Lower leg skin (tissue), 4 donors: ENCODE measurements at regions of chr22 and their contacts with region 1.

Region 1: DNA sequence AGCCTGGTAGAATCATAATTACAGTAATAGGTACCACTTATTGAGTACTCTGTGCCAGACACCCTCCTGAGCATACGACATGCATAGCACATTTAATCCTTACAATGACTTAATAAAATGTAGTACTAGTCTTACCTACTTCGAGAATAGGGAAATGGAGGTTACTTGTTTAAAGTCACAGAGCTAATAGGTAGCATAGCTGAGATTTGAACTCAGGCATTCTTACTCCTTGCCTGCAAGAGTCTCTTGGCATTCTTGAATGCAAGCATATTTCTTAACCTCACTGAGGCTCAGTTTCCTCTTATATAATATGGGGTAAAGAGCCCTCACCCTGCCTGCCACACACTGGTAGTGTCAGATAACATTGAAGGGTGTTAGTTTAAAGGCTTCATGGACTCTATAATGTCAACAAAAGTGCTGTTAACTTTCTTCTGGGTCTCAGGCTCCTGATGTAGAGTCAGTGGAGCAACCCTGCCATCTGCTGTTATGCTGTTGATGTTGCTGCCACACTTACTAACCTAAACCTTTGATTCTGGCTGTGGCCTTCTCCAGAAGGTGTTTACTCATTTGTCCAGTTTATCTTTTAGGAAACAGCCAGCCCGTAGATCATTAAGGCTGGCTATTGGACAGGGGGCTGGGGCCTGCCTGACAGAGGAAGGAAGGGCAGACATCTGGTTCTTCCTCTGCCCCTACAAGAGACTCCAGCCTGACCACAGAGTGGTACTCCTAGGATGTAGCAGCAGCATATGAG is 18.9 kb downstream of the LIMK2 start:
- DNase-seq: peak in 1 of 2 donors; percentile 37
- H3K4me3 ChIP-seq: no peak overlapping the region
- CTCF ChIP-seq: peak in 1 of 3 donors; percentile 65
- POLR2A ChIP-seq: no peak

Region 2: DNA sequence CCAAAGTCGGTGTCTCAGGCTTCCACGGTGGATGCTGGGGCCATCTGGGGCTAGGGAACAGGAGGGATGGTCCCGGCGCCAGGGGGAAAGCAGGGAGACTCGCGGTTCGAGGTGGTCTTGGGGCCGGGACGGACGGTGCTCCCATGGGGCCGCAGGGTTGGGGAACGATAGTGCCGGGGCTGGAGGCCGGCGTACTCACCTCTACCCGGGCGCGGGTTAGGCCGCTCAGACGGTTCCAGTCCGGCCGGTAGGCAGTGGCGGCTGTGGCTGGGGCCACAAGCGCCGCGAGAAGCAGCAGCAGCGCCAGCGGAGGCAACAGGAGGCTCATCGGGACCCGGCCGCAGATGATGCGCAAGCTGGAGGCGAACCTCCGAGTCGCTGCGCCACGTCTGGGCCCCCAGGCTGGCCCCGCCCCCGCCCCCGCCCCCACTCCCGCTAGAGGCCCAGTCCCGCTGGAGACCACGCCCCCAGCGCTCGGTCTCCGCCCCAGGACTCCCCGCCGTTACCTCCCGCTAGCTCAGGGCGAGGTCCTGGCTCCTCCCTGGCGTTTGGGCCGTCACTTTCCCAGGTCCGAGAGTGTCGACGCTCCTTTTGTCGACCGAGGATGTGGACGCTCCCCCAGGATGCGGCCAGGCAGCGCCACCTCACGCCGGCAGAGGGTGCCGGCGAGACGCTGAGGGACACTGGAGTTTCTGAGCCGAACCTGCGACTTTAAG is 123.7 kb before region 1 on chr22 and contains the start of gene SELENOM:
- intact Hi-C with region 1: loop called (anchors 10 kb)
- DNase-seq: peak; percentile 96 to 99
- H3K4me3 ChIP-seq: peak within 1 kb of the TSS; percentile 50
- CTCF ChIP-seq: peak in 1 of 3 donors; percentile 89
- POLR2A ChIP-seq: peak in 1 of 2 donors; percentile 61
- total RNA-seq, gene SELENOM: 66.6 to 164 (median 92.8) TPM